Endothelial cell of umbilical vein (primary cell): ENCODE measurements at regions of chr6 and their contacts with region 1.

Region 1: GRCh38 chr6:33147807-33148666 is 44.2 kb downstream of the COL11A2 start:
- DNase-seq: peak; percentile 49
- H3K4me3 ChIP-seq: no peak overlapping the region
- H3K27ac ChIP-seq: no peak overlapping the region
- H3K4me1 ChIP-seq: no peaks in the 10 kb centered on the region
- H3K27me3 ChIP-seq: peaks cover 10 to 27% of the 10 kb centered on the region in 2 experiments
- CTCF ChIP-seq: peak; percentile 66 to 69
- POLR2A ChIP-seq: no peak

Region 2: DNA sequence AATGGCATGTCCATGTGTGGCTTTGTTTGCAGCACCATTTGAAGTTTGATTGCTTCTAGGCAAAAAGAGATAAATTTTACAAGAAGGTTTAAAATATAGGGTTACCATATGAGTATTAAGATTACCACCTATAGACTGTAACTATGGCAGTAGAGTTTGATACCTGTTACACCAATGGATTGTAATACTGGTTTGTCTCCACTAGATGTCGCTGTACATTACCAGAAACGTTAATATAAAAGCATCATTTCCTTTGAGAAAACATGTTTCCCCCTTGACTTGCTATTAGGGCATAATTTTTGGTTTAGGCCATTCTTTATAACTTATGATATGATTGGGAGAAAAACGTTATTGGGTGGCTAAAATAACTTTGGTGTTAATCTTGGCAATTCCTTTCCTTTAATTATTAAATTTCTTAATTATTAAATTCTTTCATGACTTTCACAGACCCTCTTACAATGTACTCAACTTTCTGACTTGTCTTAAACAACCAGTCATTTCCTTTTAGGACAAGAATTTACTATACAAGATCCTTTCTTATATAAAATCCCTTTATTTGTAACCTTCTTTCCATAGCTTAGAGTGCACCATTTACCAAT is 29.4 kb before region 1 on chr6:
- CTCF ChIA-PET with region 1: interaction called, 20 read pairs
- POLR2A ChIA-PET with region 1: no interaction called
- dilution Hi-C with region 1: no loop called
- intact Hi-C with region 1: no loop called
- DNase-seq: peak; percentile 57
- H3K4me3 ChIP-seq: no peak overlapping the region
- H3K27ac ChIP-seq: no peak overlapping the region
- H3K4me1 ChIP-seq: no peaks in the 10 kb centered on the region
- H3K27me3 ChIP-seq: peaks cover 44 to 46% of the 10 kb centered on the region in 2 experiments
- CTCF ChIP-seq: peak; percentile 38 to 48
- POLR2A ChIP-seq: no peak

Region 3: GRCh38 chr6:33161354-33162331 is 13.6 kb after region 1 on chr6:
- CTCF ChIA-PET with region 1: interaction called, 15 read pairs
- POLR2A ChIA-PET with region 1: no interaction called
- dilution Hi-C with region 1: no loop called
- intact Hi-C with region 1: no loop called
- DNase-seq: peak; percentile 63
- H3K4me3 ChIP-seq: peak overlapping the region; percentile 25 to 31 (median 30)
- H3K27ac ChIP-seq: no peak overlapping the region
- H3K4me1 ChIP-seq: no peaks in the 10 kb centered on the region
- H3K27me3 ChIP-seq: no peaks in the 10 kb centered on the region
- CTCF ChIP-seq: peak; percentile 94 to 98
- POLR2A ChIP-seq: no peak

Region 4: GRCh38 chr6:33535104-33535603 is 387.1 kb after region 1 on chr6:
- CTCF ChIA-PET with region 1: no interaction called
- POLR2A ChIA-PET with region 1: no interaction called
- dilution Hi-C with region 1: no loop called
- intact Hi-C with region 1: no loop called
- DNase-seq: no peak
- H3K4me3 ChIP-seq: no peak overlapping the region
- H3K27ac ChIP-seq: no peak overlapping the region
- H3K4me1 ChIP-seq: no peaks in the 10 kb centered on the region
- H3K27me3 ChIP-seq: no peaks in the 10 kb centered on the region
- CTCF ChIP-seq: no peak
- POLR2A ChIP-seq: no peak